ENCODE measurements at regions of chr3 and their contacts with region 1.

Region 1: DNA sequence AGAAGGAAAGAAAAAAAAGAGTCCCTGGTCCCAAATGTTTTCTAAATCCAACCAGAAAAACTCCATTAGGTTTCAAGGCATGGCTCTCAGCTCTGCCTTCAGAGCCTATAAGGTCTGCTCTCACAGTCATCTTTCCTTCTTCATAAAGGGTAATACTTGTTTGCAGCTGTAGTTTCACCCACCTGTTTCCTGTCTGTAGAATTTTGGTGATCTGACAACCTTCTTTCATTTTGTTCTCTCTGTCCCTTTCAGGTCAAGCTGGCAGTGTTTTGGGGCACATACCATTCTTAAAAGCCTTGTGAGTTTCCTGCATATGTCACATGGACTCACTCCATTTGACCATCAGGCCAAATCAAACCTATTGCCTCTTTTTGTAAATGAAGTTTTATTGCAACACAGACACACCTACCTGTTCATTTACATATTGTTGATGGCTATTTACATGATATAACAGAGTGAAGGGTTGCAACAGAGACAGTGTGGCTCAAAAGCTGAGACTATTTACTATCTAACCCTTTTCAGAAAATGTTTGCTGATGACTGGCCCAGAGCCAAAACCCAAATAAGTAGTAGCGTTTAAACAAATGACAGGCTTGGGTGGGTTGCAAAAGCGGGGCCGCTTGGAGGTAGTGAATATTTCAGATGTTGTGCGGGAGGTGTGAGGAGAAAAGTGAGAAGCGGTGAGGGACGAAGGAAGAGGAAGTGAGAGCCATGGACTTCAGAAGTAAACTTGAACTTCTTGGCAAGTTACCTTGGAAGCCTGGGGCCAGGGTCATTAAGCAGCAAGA is 292.7 kb upstream of the PROK2 start:
- DNase-seq: no peak
- H3K4me3 Mint-ChIP-seq: peak overlapping the region; percentile 40
- H3K27ac Mint-ChIP-seq: peak overlapping the region; percentile 64
- H3K4me1 Mint-ChIP-seq: peaks cover 33% of the 10 kb centered on the region
- H3K27me3 Mint-ChIP-seq: peaks cover 2% of the 10 kb centered on the region

Region 2: GRCh38 chr3:71512000-71512399 is 565.7 kb before region 1 on chr3:
- intact Hi-C with region 1: no loop called
- DNase-seq: peak; percentile 3
- H3K4me3 Mint-ChIP-seq: no peak overlapping the region
- H3K27ac Mint-ChIP-seq: no peak overlapping the region
- H3K4me1 Mint-ChIP-seq: peaks cover 8% of the 10 kb centered on the region
- H3K27me3 Mint-ChIP-seq: peaks cover 3% of the 10 kb centered on the region

Region 3: GRCh38 chr3:72060447-72061034 is 17.1 kb before region 1 on chr3:
- intact Hi-C with region 1: loop called (anchors 2 kb)
- DNase-seq: no peak
- H3K4me3 Mint-ChIP-seq: no peak overlapping the region
- H3K27ac Mint-ChIP-seq: peak overlapping the region; percentile 47
- H3K4me1 Mint-ChIP-seq: peaks cover 17% of the 10 kb centered on the region
- H3K27me3 Mint-ChIP-seq: no peaks in the 10 kb centered on the region

Region 4: GRCh38 chr3:72100601-72101187 is 23.0 kb after region 1 on chr3:
- intact Hi-C with region 1: loop called (anchors 1 kb)
- DNase-seq: peak; percentile 95
- H3K4me3 Mint-ChIP-seq: peak overlapping the region; percentile 78
- H3K27ac Mint-ChIP-seq: peak overlapping the region; percentile 88
- H3K4me1 Mint-ChIP-seq: peaks cover 32% of the 10 kb centered on the region
- H3K27me3 Mint-ChIP-seq: peaks cover 5% of the 10 kb centered on the region